ENCODE measurements at regions of chr10 and their contacts with region 1.

Region 1: GRCh38 chr10:102835007-102835482 is 2.2 kb downstream of the CYP17A1 start:
- DNase-seq: peak; percentile 75 to 85 (median 83)
- ATAC-seq: peak; percentile 91 to 92
- H3K4me3 ChIP-seq: no peak overlapping the region
- H3K27ac ChIP-seq: no peak overlapping the region
- H3K4me1 ChIP-seq: no peaks in the 10 kb centered on the region
- H3K27me3 ChIP-seq: no peaks in the 10 kb centered on the region

Region 2: GRCh38 chr10:102904346-102904745 is 69.3 kb after region 1 on chr10:
- intact Hi-C with region 1: loop called in 3 of 4 experiments (anchors 2 to 5 kb)
- DNase-seq: no peak
- ATAC-seq: no peak
- H3K4me3 ChIP-seq: no peak overlapping the region
- H3K27ac ChIP-seq: no peak overlapping the region
- H3K4me1 ChIP-seq: no peaks in the 10 kb centered on the region
- H3K27me3 ChIP-seq: no peaks in the 10 kb centered on the region

Region 3: GRCh38 chr10:103069453-103070331 is 234.6 kb after region 1 on chr10:
- intact Hi-C with region 1: loop called in 3 of 4 experiments (anchors 10 kb)
- DNase-seq: peak; percentile 34 to 75 (median 70)
- ATAC-seq: peak; percentile 68 to 76
- H3K4me3 ChIP-seq: no peak overlapping the region
- H3K27ac ChIP-seq: no peak overlapping the region
- H3K4me1 ChIP-seq: no peaks in the 10 kb centered on the region
- H3K27me3 ChIP-seq: no peaks in the 10 kb centered on the region

Region 4: GRCh38 chr10:103254538-103255325 is 419.7 kb after region 1 on chr10:
- intact Hi-C with region 1: loop called in 3 of 4 experiments (anchors 10 kb)
- DNase-seq: no peak
- ATAC-seq: no peak
- H3K4me3 ChIP-seq: no peak overlapping the region
- H3K27ac ChIP-seq: no peak overlapping the region
- H3K4me1 ChIP-seq: no peaks in the 10 kb centered on the region
- H3K27me3 ChIP-seq: no peaks in the 10 kb centered on the region